ENCODE measurements at regions of chr1 and their contacts with region 1.

Region 1: DNA sequence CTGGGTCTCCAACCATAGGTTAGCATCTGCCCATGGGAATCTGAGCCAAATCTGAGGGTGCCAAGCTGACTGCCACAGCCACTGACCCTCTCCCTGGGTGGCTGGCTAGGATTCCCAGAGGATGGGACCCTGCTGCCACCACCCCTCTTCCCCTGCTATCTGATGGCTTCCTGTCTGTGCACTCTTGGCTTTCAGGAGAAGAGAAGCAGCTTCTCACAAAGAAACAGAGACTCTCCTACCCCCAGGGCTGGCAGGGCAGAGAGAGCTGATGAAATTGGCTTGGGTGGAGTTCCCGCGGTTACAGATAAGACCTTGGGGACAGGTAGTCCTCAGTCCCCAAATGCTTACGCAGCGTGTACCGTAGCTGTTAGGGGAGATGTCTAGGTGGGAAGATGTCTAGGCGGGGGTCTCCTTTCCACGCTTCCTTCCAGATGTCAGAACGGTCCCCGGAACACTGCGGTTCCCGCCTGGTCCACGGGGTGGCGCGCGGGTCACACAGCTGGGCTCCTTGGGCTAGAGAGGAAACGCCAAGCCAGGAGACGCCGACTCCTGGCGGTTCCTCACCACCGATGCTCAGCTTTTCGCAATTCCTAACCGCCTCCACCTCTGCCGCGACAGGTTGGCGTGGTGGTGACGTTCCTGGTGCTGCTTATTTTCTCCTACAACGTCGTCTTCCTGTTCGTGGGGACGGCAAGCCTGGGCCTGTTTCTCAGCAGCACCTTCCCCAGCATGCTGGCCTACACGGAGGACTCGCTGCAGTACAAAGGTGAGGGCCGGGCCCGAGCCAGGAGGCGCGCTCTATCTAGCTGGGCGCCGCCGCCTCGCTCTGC is 40.1 kb downstream of the ELK4 start:
- DNase-seq: no peak
- H3K4me3 ChIP-seq: peak overlapping the region; percentile 37
- H3K27me3 ChIP-seq: no peaks in the 10 kb centered on the region
- CTCF ChIP-seq: peak; percentile 98

Region 2: DNA sequence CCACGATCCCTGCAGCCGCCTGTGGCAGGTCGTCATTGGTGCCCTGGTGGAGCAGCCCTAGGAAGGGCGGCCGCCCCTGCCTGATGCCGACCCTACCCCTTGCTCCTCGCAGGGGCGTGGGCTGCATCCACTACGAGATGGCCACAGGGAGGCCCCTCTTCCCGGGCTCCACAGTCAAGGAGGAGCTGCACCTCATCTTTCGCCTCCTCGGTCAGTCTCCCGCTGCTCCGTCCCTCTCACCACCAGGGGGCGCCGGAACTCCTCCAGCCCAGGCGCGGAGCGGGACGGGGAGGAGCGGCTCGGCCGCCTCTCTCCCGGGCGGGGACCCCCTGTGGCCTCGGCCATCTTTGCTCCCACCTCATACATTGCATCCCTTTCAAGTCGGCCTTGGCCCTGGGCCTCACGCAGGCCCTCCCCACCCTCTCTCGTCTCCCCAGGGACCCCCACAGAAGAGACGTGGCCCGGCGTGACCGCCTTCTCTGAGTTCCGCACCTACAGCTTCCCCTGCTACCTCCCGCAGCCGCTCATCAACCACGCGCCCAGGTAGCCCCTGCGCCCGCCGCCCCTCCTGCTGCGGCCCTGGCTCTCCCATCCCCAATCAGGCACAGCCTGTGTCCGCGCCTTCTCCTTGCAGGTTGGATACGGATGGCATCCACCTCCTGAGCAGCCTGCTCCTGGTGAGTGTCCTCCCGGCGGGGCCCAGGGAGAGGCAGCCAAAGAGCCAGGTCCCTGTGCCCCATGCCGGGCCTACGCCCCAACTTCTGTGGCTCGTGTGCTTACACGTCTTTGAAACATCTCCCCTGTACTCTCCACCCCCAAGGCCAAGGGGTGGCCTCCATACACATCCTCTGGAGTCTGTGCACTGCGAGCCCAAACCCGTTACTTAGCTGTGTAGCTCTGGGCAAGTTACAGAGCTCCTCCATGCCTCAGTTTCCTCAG is 62.6 kb before region 1 on chr1:
- CTCF ChIA-PET with region 1: interaction called, 18 read pairs
- POLR2A ChIA-PET with region 1: no interaction called
- DNase-seq: no peak
- H3K4me3 ChIP-seq: peak overlapping the region; percentile 37
- H3K27me3 ChIP-seq: no peaks in the 10 kb centered on the region; the same call in 1 of the 2 replicates
- CTCF ChIP-seq: peak; percentile 96

Region 3: GRCh38 chr1:205554026-205554811 is 37.5 kb before region 1 on chr1:
- CTCF ChIA-PET with region 1: interaction called, 12 read pairs
- POLR2A ChIA-PET with region 1: no interaction called
- DNase-seq: no peak
- H3K4me3 ChIP-seq: no peak overlapping the region
- H3K27me3 ChIP-seq: peaks cover 8% of the 10 kb centered on the region
- CTCF ChIP-seq: no peak

Region 4: GRCh38 chr1:205610036-205610435 is 18.3 kb after region 1 on chr1:
- CTCF ChIA-PET with region 1: interaction called, 12 read pairs
- POLR2A ChIA-PET with region 1: no interaction called
- DNase-seq: no peak
- H3K4me3 ChIP-seq: no peak overlapping the region
- H3K27me3 ChIP-seq: no peaks in the 10 kb centered on the region
- CTCF ChIP-seq: no peak

Region 5: GRCh38 chr1:205631727-205632373 is 40.1 kb after region 1 on chr1 and contains the start of gene ELK4:
- CTCF ChIA-PET with region 1: interaction called, 61 read pairs
- POLR2A ChIA-PET with region 1: interaction called, 5 read pairs
- DNase-seq: peak; percentile 80
- H3K4me3 ChIP-seq: peak within 1 kb of the TSS; percentile 63
- H3K27me3 ChIP-seq: no peaks in the 10 kb centered on the region
- CTCF ChIP-seq: peak; percentile 78
- polyA plus RNA-seq, gene ELK4: 3.4 and 5.7 TPM in 2 replicates

Region 6: GRCh38 chr1:205711104-205712020 is 119.6 kb after region 1 on chr1:
- CTCF ChIA-PET with region 1: interaction called, 42 read pairs
- POLR2A ChIA-PET with region 1: interaction called, 16 read pairs
- DNase-seq: peak; percentile 20
- H3K4me3 ChIP-seq: no peak overlapping the region
- H3K27me3 ChIP-seq: no peaks in the 10 kb centered on the region
- CTCF ChIP-seq: peak; percentile 87

Measured in BJ (cell line).